K562 (cell line): ENCODE measurements at regions of chr7 and their contacts with region 1.

Region 1: DNA sequence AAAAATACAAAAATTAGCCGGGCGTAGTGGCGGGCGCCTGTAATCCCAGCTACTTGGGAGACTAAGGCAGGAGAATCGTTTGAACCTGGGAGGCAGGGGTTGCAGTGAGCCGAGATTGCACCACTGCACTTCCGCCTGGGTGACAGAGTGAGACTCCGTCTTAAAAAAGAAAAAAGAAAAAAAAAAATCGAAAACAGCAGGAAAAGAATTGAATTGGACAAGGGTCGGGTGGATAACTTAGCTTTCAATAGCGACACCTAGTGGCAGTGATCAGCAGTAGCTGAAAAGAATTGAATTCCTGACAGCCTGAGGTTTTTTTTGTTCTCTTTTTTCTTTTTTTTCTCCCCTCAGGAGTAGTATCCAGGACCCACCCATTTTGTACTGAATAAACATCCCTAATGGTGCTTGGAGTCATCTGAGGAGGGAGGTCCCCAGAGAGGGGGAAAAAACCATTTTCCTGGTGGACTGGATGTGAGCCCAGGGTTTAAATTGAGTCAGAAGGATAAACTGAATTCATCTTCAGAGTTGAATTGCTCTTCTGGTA is 55.1 kb downstream of the CYCS start:
- DNase-seq: peak; percentile 74 to 78 (median 76)
- ATAC-seq: peak; percentile 77
- H3K4me3 ChIP-seq: no peak overlapping the region
- H3K27ac ChIP-seq: no peak overlapping the region
- H3K4me1 ChIP-seq: peaks cover 0 to 11% of the 10 kb centered on the region in 2 experiments; a peak in 4 of 5 replicates
- H3K27me3 ChIP-seq: no peaks in the 10 kb centered on the region
- CTCF ChIP-seq: peak; percentile 71 to 91 (median 84)
- EP300 ChIP-seq: no peak
- POLR2A ChIP-seq: no peak
- RAD21 ChIP-seq: peak; percentile 80 to 84

Region 2: GRCh38 chr7:24812310-24812945 is 257.5 kb before region 1 on chr7:
- CTCF ChIA-PET with region 1: interaction called, 16 read pairs
- POLR2A ChIA-PET with region 1: no interaction called
- in situ Hi-C with region 1: no loop called
- intact Hi-C with region 1: loop called (anchors 2 kb)
- DNase-seq: peak; percentile 60 to 73 (median 64)
- ATAC-seq: peak; percentile 99
- H3K4me3 ChIP-seq: no peak overlapping the region
- H3K27ac ChIP-seq: no peak overlapping the region
- H3K4me1 ChIP-seq: no peaks in the 10 kb centered on the region
- H3K27me3 ChIP-seq: no peaks in the 10 kb centered on the region
- CTCF ChIP-seq: peak; percentile 74 to 88 (median 85)
- EP300 ChIP-seq: no peak
- POLR2A ChIP-seq: no peak
- RAD21 ChIP-seq: peak; percentile 75 to 76

Region 3: DNA sequence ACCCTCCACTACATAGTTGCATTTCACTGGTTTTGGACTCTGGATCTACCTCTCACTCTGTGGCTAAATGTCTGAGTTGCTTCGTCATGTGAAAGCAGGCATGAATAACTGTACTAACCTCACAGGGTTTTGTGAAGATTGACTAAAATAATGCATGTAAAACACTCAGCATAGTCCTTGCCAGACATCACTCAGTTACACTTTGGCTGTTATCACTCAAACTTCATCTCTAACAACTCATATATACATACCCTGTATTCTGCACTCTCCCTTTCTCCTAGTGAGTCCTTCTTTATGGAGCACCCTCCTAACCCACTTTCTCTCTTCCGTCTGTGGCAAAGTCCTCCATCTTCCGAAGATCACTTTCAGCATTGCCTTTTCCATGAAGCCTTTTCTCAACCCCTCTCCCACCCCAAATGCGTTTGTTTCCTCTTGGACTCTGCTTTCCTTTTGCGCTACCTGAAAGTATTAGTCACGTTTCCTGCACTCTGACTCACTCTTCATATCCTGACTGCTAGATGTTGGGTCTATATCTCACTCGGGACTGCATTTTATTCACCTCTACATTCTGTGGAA is 162.6 kb before region 1 on chr7:
- CTCF ChIA-PET with region 1: interaction called, 3 read pairs
- POLR2A ChIA-PET with region 1: no interaction called
- in situ Hi-C with region 1: no loop called
- intact Hi-C with region 1: loop called (anchors 5 kb)
- DNase-seq: peak in 3 of 4 experiments; percentile 27 to 72 (median 56)
- ATAC-seq: peak; percentile 71
- H3K4me3 ChIP-seq: peak overlapping the region; percentile 14; the same call in 1 of the 2 replicates
- H3K27ac ChIP-seq: peak overlapping the region; percentile 75
- H3K4me1 ChIP-seq: peaks cover 41 to 87% of the 10 kb centered on the region in 2 experiments
- H3K27me3 ChIP-seq: no peaks in the 10 kb centered on the region
- CTCF ChIP-seq: no peak
- EP300 ChIP-seq: no peak; the same call in 1 of the 2 replicates
- POLR2A ChIP-seq: peak; percentile 47; the same call in 1 of the 2 replicates
- RAD21 ChIP-seq: no peak; a peak in 1 of 4 replicates

Region 4: GRCh38 chr7:24979863-24980533 is 90.0 kb before region 1 on chr7 and contains the start of gene OSBPL3:
- CTCF ChIA-PET with region 1: no interaction called
- POLR2A ChIA-PET with region 1: no interaction called
- in situ Hi-C with region 1: no loop called
- intact Hi-C with region 1: loop called (anchors 1 kb)
- DNase-seq: peak; percentile 96 to 99 (median 98)
- ATAC-seq: peak; percentile 88
- H3K4me3 ChIP-seq: peak within 1 kb of the TSS; percentile 85
- H3K27ac ChIP-seq: peak within 1 kb of the TSS; percentile 80
- H3K4me1 ChIP-seq: peaks cover 21 to 34% of the 10 kb centered on the region in 2 experiments
- H3K27me3 ChIP-seq: no peaks in the 10 kb centered on the region
- CTCF ChIP-seq: peak in 2 of 3 experiments; percentile 22 to 53; a peak in 4 of 6 replicates
- EP300 ChIP-seq: no peak; the same call in 1 of the 2 replicates
- POLR2A ChIP-seq: peak; percentile 86
- RAD21 ChIP-seq: peak; percentile 14 to 36; a peak in 2 of 4 replicates
- polyA plus RNA-seq, gene OSBPL3: 4.8 to 6.8 TPM